Dorsolateral prefrontal cortex (tissue), 120 donors: ENCODE measurements at regions of chr5 and their contacts with region 1.

Region 1: DNA sequence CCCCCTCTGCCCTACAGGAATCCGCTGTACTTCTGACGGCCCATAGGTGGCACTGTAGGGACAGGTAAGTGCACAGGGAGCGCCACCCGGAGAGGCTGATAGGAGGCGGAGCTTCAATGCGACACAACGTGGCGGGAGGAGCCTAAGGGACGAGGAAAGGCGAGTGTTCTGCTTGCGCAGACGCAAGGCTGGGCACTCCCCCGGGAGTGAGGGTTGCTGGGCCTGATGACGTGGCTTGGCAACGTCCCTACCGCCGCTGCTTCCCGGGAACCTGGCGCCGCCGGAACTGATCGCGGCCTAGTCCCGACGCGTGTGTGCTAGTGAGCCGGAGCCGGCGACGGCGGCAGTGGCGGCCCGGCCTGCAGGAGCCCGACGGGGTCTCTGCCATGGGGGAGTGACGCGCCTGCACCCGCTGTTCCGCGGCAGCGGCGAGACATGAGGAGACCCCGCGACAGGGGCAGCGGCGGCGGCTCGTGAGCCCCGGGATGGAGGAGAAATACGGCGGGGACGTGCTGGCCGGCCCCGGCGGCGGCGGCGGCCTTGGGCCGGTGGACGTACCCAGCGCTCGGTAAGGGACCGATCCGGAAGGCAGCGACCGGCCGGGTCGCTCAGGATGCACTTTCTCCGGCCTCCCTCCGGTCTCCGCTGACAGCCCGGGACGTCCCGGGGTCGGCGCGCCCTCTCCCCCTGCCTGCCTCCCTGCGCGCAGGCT is at the start of gene SLC30A5:
- DNase-seq: peak; percentile 94 to 100 (median 99)
- H3K4me3 ChIP-seq: peak within 1 kb of the TSS; percentile 56 to 100 (median 92)
- H3K27ac ChIP-seq: peak within 1 kb of the TSS in 58 of 59 donors; percentile 33 to 97 (median 89)
- H3K27me3 ChIP-seq: no peaks in the 10 kb centered on the region
- CTCF ChIP-seq: peak; percentile 84 to 99 (median 96)
- total RNA-seq, gene SLC30A5: 17.3 to 42.7 (median 28.2) TPM

Region 2: DNA sequence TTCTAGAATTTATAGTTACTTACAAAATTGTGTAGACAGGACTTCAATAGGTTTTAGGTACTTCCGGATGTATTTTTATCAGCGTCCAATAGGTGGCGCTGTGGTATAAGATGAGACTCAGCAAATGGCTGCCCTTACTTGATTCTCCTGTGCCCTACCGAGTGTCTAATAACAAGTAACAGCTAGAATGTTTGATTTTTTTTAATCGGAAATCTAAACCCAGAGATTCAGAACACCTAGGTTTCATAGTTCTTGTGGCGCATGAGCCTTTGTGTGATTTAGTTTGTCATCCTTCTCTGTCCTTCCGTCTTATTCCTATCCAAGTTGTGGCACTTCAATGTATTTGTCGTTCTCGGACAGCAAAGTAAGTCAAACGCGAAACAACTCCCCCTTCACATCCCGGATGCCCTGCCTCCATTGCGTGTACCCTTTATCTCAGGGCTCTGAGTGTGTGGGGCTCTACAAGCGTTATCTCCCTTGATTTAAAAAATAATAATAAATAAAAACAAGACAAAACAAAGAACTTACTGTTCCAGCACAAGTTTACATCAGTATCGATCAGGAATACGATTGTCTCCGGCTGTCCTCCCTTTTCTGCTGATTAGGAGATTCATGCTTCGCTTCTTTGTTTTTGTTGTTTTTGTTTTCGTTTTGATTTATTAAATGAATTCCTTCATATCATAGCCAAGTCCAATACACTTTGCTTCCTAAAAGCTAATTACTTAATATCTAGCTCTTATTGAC is 50.8 kb before region 1 on chr5:
- intact Hi-C with region 1: loop called (anchors 5 kb)
- DNase-seq: peak in 7 of 10 donors; percentile 36 to 78 (median 55)
- H3K4me3 ChIP-seq: peak overlapping the region; percentile 23 to 78 (median 58)
- H3K27ac ChIP-seq: peak overlapping the region; percentile 5 to 93 (median 84)
- H3K27me3 ChIP-seq: no peaks in the 10 kb centered on the region
- CTCF ChIP-seq: peak; percentile 73 to 97 (median 88)

Region 3: GRCh38 chr5:69166686-69167492 is 73.0 kb after region 1 on chr5 and contains the start of gene CCNB1:
- intact Hi-C with region 1: loop called (anchors 2 to 10 kb)
- DNase-seq: peak; percentile 95 to 99 (median 98)
- H3K4me3 ChIP-seq: peak within 1 kb of the TSS; percentile 54 to 99 (median 80)
- H3K27ac ChIP-seq: peak within 1 kb of the TSS in 44 of 59 donors; percentile 15 to 87 (median 60)
- H3K27me3 ChIP-seq: no peaks in the 10 kb centered on the region
- CTCF ChIP-seq: peak in 43 of 56 donors; percentile 6 to 63 (median 37)
- total RNA-seq, gene CCNB1: 5.0 to 23.5 (median 11.9) TPM

Region 4: DNA sequence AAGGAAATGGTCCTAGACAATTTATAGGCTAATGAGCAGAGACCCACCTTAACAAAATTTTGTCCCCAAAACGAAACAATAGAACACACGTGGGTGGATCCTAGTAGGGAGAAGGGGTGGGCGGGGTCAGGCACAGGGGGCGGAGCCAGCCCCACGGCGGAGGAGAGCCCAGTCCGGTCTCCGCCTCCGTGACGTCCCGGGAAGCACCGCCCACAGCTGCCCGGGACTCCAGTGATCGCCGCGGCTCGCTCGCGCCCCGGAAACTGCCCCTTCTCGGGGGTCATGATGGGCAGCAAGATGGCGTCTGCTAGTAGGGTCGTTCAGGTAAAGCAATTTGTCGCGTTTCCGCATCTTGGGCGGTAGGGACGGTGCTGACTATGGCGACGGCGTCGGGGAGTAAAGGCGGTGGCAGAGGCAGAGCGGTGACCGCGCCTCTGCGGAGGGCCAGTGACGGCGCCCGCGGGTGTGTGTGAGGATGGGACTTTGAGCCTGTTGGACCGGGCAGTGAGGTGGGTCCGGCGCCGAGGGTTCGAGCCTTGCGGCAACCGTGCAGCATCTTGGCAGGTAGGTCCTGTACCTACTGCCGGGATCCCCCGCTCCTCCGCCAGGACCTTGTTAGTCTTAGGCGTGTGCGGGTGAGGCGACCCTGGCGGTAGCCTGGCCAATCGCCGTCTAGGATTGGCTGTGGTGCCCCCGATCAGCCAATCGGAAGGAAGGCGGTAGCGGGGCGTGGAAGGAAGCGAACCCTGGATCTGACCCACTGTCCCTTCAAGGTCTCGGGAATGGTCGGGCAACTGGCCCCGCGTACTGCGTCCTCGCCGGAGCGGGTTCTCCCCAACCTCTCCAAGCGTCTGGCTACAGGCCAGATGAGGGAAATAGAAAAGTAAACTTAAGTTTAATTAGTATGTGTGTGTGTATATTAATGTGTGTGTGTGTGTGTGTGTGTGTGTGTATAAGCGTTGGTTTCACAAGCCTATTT is 123.9 kb after region 1 on chr5:
- intact Hi-C with region 1: loop called in 1 of 2 experiments (anchors 10 kb)
- DNase-seq: peak; percentile 93 to 98 (median 96)
- H3K4me3 ChIP-seq: peak overlapping the region; percentile 70 to 100 (median 98)
- H3K27ac ChIP-seq: peak overlapping the region; percentile 30 to 96 (median 87)
- H3K27me3 ChIP-seq: no peaks in the 10 kb centered on the region
- CTCF ChIP-seq: peak in 43 of 56 donors; percentile 6 to 54 (median 30)

Region 5: GRCh38 chr5:69334793-69335268 is 240.9 kb after region 1 on chr5:
- intact Hi-C with region 1: loop called (anchors 2 to 5 kb)
- DNase-seq: peak; percentile 79 to 88 (median 86)
- H3K4me3 ChIP-seq: peak overlapping the region in 37 of 59 donors; percentile 7 to 51 (median 32)
- H3K27ac ChIP-seq: peak overlapping the region in 4 of 59 donors; percentile 16 to 39 (median 24)
- H3K27me3 ChIP-seq: no peaks in the 10 kb centered on the region
- CTCF ChIP-seq: peak; percentile 30 to 81 (median 70)